ENCODE measurements at regions of chr3 and their contacts with region 1.

Region 1: DNA sequence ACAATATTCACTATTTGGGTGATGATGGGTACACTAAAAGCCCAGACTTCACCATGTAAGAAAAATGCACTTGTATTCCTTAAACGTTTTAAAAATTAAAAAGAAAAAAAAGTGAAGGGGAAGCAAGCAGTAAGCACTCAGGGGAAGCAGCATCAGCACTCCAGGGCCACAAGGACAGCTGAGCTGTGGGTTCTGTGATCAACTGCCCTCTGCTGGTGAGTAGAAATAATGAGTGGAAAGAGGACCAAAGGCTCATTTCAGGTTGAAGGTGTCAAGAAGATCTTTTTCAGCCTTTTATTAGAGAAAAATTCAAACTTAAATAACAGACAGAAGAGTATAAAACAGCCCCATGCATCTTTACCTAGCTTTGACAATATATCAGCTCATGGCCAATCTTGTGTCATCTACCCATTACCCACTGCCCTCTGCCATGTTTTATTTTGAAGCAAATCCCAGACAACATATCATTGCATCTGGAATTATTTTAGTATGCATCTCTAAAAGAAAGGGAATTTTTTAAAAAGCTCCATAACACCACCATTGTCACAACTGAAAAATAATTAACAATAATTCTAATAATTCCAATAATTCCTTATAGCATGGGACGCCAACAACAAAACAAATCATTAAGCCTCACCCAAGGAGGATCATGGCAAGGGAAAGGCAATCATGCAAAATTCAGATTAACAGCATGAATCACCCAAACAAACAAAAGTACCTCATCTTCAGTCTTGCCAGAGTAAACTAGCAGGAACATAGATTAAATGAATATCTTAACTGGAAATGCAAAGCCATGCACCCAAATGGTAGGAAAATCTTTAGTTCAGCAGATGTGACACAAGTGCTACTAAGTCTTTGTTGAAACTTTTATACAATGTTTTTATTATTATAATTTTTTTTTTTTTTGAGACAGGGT is 42.5 kb downstream of the TAMM41 start:
- DNase-seq: peak; percentile 47 to 55
- H3K4me3 ChIP-seq: no peak overlapping the region
- H3K4me3 Mint-ChIP-seq: no peak overlapping the region
- H3K27ac Mint-ChIP-seq: no peak overlapping the region
- H3K4me1 ChIP-seq: no peaks in the 10 kb centered on the region
- H3K4me1 Mint-ChIP-seq: no peaks in the 10 kb centered on the region
- H3K27me3 ChIP-seq: no peaks in the 10 kb centered on the region
- H3K27me3 Mint-ChIP-seq: no peaks in the 10 kb centered on the region
- CTCF ChIP-seq: peak; percentile 73 to 79

Region 2: DNA sequence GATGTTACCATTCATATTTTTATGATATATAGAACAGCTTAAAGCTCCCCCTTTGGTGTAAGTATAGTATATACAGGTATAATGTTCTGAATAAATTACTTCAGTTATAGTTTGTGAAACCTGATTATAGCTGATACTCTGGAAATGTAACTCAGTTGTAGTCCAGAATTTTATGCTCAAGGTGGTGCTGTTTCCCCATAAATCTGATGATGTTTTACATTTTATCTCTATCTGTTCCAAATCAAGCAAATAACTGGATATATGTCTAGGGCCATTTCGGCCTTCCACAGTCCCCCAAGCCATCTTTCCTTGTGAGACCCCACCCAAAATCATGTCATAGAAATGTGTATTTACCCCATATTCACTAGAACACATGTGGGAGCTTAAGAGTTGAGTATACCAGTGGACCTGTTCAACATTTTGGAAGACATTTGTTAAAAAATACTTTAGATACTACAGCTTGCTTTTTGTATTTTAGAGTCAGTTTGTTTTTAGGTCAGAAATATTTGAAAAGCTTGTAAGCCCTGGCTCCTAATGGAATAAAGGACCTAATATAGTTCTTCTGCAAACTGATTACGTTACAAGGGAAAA is 424.9 kb before region 1 on chr3:
- CTCF ChIA-PET with region 1: interaction called, 8 read pairs
- POLR2A ChIA-PET with region 1: no interaction called
- intact Hi-C with region 1: loop called (anchors 1 kb)
- DNase-seq: peak in 1 of 2 experiments; percentile 48
- H3K4me3 ChIP-seq: no peak overlapping the region
- H3K4me3 Mint-ChIP-seq: no peak overlapping the region
- H3K27ac Mint-ChIP-seq: peak overlapping the region; percentile 48
- H3K4me1 ChIP-seq: peaks cover 21% of the 10 kb centered on the region
- H3K4me1 Mint-ChIP-seq: peaks cover 20% of the 10 kb centered on the region
- H3K27me3 ChIP-seq: no peaks in the 10 kb centered on the region
- H3K27me3 Mint-ChIP-seq: no peaks in the 10 kb centered on the region
- CTCF ChIP-seq: peak; percentile 34 to 54

Region 3: DNA sequence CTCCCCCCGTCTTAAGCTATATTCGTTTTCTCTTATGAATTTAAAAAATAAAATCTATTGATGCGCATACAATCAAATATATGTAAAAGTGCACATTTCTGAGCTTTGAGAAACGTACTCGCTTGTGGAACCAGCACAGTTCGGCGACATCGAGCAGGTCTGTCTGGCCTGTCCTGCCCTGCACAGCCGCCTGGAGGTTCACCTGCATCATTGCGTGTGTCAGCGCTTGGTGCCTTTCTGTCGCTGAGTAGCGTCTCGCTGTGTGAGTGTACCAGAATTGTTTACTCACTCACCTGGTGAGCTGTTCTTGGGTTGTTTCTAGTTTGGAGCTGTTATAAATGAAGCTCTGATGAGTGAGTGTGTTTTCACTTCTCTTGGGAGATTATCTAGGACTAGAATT is 264.6 kb before region 1 on chr3:
- CTCF ChIA-PET with region 1: no interaction called
- POLR2A ChIA-PET with region 1: no interaction called
- intact Hi-C with region 1: loop called (anchors 1 kb)
- DNase-seq: no peak
- H3K4me3 ChIP-seq: no peak overlapping the region
- H3K4me3 Mint-ChIP-seq: no peak overlapping the region
- H3K27ac Mint-ChIP-seq: peak overlapping the region; percentile 58
- H3K4me1 ChIP-seq: no peaks in the 10 kb centered on the region
- H3K4me1 Mint-ChIP-seq: no peaks in the 10 kb centered on the region
- H3K27me3 ChIP-seq: no peaks in the 10 kb centered on the region
- H3K27me3 Mint-ChIP-seq: no peaks in the 10 kb centered on the region
- CTCF ChIP-seq: peak in 1 of 2 experiments; percentile 19

Region 4: DNA sequence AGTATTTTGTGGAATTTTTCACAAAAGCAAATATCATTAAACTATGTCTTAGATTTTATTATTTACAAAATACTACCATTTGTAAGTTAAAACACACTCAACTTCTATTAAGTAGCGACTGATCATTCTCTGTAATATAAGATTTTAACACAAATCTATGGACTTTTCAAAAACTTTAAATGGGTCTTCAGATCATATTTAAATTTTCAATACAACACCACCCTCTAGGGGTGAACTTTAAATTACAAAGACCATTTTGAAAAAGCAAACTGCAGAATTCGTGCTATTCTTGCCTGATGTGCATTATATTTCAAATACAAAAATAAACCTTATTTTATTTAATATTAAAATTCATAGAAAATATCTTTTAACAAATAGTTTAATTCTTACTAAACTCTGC is 152.3 kb before region 1 on chr3:
- CTCF ChIA-PET with region 1: no interaction called
- POLR2A ChIA-PET with region 1: no interaction called
- intact Hi-C with region 1: loop called (anchors 1 kb)
- DNase-seq: peak in 1 of 2 experiments; percentile 23
- H3K4me3 ChIP-seq: no peak overlapping the region
- H3K4me3 Mint-ChIP-seq: no peak overlapping the region
- H3K27ac Mint-ChIP-seq: no peak overlapping the region
- H3K4me1 ChIP-seq: peaks cover 11% of the 10 kb centered on the region
- H3K4me1 Mint-ChIP-seq: peaks cover 11% of the 10 kb centered on the region
- H3K27me3 ChIP-seq: no peaks in the 10 kb centered on the region
- H3K27me3 Mint-ChIP-seq: no peaks in the 10 kb centered on the region
- CTCF ChIP-seq: peak; percentile 24 to 46

Region 5: GRCh38 chr3:11662402-11662990 is 141.7 kb before region 1 on chr3:
- CTCF ChIA-PET with region 1: interaction called, 3 read pairs
- POLR2A ChIA-PET with region 1: no interaction called
- intact Hi-C with region 1: loop called (anchors 2 kb)
- DNase-seq: peak in 1 of 2 experiments; percentile 32
- H3K4me3 ChIP-seq: no peak overlapping the region
- H3K4me3 Mint-ChIP-seq: no peak overlapping the region
- H3K27ac Mint-ChIP-seq: peak overlapping the region; percentile 46
- H3K4me1 ChIP-seq: peaks cover 8% of the 10 kb centered on the region; the same call in 1 of the 2 replicates
- H3K4me1 Mint-ChIP-seq: peaks cover 23% of the 10 kb centered on the region
- H3K27me3 ChIP-seq: no peaks in the 10 kb centered on the region
- H3K27me3 Mint-ChIP-seq: no peaks in the 10 kb centered on the region
- CTCF ChIP-seq: peak; percentile 44 to 66

Region 6: DNA sequence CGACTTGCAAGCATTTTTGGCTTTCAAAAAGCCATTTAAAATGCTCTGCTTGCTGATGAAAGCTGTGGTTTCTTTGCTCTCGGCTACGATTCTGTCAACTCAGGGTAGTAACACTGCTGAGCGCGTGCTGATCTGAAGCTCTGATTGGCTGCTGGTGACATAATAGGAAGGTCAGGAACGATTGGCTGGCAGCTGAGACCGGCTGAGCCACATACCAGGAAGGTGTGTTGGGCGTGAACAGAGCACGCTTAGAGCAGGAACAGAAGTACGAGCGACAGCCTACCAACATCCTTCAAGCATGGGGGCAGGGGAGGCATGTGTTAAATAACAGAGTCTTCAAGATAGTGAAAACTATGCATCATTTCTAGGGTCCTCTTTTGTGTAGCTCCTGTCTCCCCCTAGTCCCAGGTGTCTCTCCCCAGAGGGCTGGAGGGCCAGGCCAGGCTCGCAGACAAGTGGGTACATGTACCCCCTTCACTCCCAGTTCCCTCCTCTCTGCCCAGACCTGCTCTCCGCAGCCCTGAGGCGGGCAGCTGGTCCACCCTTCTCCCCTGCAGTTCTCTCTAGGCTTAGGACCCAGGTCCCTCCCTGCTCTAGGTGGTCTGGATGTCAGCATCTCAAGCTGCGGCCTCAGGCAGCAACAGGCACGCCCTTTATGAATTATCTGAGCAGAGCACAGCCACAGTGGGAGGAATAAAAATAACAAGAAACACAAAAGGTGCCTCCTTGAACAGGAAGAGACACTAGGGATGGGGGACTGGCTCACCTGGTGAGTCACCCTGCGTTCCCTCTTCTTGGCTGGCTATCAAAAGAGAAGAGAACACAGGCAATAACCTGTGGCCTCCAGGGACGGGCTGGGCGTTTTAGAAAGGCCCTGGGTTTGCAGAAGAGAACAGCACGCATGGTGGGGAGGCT is 33.5 kb before region 1 on chr3:
- CTCF ChIA-PET with region 1: interaction called, 8 read pairs
- POLR2A ChIA-PET with region 1: no interaction called
- intact Hi-C with region 1: loop called (anchors 1 kb)
- DNase-seq: peak; percentile 89 to 94
- H3K4me3 ChIP-seq: peak overlapping the region; percentile 23
- H3K4me3 Mint-ChIP-seq: peak overlapping the region; percentile 81
- H3K27ac Mint-ChIP-seq: peak overlapping the region; percentile 94
- H3K4me1 ChIP-seq: peaks cover 7% of the 10 kb centered on the region
- H3K4me1 Mint-ChIP-seq: peaks cover 19% of the 10 kb centered on the region
- H3K27me3 ChIP-seq: no peaks in the 10 kb centered on the region
- H3K27me3 Mint-ChIP-seq: no peaks in the 10 kb centered on the region
- CTCF ChIP-seq: no peak